ENCODE measurements at regions of chr16 and their contacts with region 1.

Region 1: GRCh38 chr16:12455287-12455798 is 348.3 kb downstream of the CPPED1 start:
- H3K4me3 Mint-ChIP-seq: no peak overlapping the region
- H3K27ac Mint-ChIP-seq: no peak overlapping the region
- H3K4me1 Mint-ChIP-seq: peaks cover 59% of the 10 kb centered on the region
- H3K27me3 Mint-ChIP-seq: no peaks in the 10 kb centered on the region

Region 2: DNA sequence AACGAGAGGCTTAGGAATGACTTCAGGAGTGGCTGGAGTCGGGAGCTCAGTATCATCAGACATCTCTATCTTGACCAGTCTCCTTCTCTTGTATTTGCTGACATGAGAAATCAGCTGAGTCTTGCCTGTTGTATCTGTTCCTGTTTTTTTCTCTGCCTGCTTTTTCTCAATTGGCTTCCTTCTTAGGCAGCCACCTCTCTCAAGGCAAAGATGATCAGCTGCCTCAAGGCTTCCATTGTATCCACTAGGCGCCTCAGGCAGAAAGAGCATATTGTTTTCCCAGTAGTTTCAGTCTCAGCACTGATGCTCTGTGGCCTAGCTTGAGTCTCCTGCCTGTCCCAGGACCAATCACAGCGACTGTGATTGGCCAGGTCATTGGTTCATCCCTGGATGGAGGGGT is 42.2 kb after region 1 on chr16:
- intact Hi-C with region 1: loop called (anchors 5 kb)
- H3K4me3 Mint-ChIP-seq: no peak overlapping the region
- H3K27ac Mint-ChIP-seq: peak overlapping the region; percentile 86
- H3K4me1 Mint-ChIP-seq: peaks cover 75% of the 10 kb centered on the region
- H3K27me3 Mint-ChIP-seq: no peaks in the 10 kb centered on the region

Region 3: DNA sequence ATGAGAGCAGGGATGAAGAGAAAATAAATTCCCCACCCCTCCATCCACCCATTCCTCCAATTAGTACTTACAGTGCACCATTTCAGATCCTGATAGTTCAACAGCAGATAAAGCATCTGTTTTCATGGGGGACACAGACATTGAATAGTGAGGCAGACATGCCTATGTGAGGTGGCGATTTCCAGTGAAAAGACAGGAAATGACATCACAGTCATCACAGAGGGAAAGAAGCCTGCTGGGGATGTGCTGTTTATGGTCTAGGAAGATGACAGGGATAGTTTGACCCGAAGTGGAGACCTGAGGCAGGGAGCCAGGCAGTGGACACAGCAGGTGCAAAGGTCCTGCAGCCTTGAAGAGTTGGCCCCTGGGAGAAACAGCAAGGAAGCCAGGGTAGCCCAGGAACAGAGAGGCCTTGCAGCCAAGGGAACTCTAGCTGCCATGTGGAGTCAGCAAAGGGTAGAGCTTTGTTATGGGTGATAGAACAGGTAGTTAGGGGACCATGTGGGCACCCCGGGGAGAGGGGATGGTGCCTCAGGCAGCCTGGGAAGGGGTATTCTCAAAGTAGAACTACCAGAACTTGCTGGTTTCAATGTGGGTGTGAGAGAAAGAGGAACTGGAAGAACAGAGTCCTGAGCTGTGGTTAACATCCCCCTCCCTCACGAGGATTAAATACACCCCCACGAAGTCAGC is 91.7 kb after region 1 on chr16:
- intact Hi-C with region 1: loop called (anchors 5 kb)
- H3K4me3 Mint-ChIP-seq: peak overlapping the region; percentile 13
- H3K27ac Mint-ChIP-seq: peak overlapping the region; percentile 76
- H3K4me1 Mint-ChIP-seq: peaks cover 71% of the 10 kb centered on the region
- H3K27me3 Mint-ChIP-seq: no peaks in the 10 kb centered on the region

Region 4: GRCh38 chr16:12685806-12686205 is 230.5 kb after region 1 on chr16:
- intact Hi-C with region 1: loop called (anchors 10 kb)
- H3K4me3 Mint-ChIP-seq: no peak overlapping the region
- H3K27ac Mint-ChIP-seq: peak overlapping the region; percentile 45
- H3K4me1 Mint-ChIP-seq: peaks cover 28% of the 10 kb centered on the region
- H3K27me3 Mint-ChIP-seq: no peaks in the 10 kb centered on the region

Region 5: GRCh38 chr16:12803203-12804097 is 348.1 kb after region 1 on chr16 and contains the start of gene CPPED1:
- intact Hi-C with region 1: loop called (anchors 5 kb)
- H3K4me3 Mint-ChIP-seq: peak within 1 kb of the TSS; percentile 85
- H3K27ac Mint-ChIP-seq: peak within 1 kb of the TSS; percentile 89
- H3K4me1 Mint-ChIP-seq: peaks cover 62% of the 10 kb centered on the region
- H3K27me3 Mint-ChIP-seq: peaks cover 2% of the 10 kb centered on the region

Region 6: GRCh38 chr16:12819126-12820117 is 364.1 kb after region 1 on chr16:
- intact Hi-C with region 1: loop called (anchors 2 kb)
- H3K4me3 Mint-ChIP-seq: no peak overlapping the region
- H3K27ac Mint-ChIP-seq: no peak overlapping the region
- H3K4me1 Mint-ChIP-seq: peaks cover 46% of the 10 kb centered on the region
- H3K27me3 Mint-ChIP-seq: peaks cover 18% of the 10 kb centered on the region